Activated CD8-positive, alpha-beta memory T cell treated with anti-CD3 and anti-CD28 coated beads, Interleukin-2, amount 10 ng/mL, durations not matched to agents 7 days and 5 days (primary cell): ENCODE measurements at regions of chr1 and their contacts with region 1.

Region 1: GRCh38 chr1:8314346-8315280 is 3.3 kb upstream of the SLC45A1 start:
- DNase-seq: peak; percentile 60
- ATAC-seq: peak; percentile 25
- H3K4me3 Mint-ChIP-seq: no peak overlapping the region
- H3K27ac Mint-ChIP-seq: peak overlapping the region; percentile 9
- H3K4me1 Mint-ChIP-seq: peaks cover 13% of the 10 kb centered on the region
- H3K27me3 Mint-ChIP-seq: peaks cover 47% of the 10 kb centered on the region

Region 2: DNA sequence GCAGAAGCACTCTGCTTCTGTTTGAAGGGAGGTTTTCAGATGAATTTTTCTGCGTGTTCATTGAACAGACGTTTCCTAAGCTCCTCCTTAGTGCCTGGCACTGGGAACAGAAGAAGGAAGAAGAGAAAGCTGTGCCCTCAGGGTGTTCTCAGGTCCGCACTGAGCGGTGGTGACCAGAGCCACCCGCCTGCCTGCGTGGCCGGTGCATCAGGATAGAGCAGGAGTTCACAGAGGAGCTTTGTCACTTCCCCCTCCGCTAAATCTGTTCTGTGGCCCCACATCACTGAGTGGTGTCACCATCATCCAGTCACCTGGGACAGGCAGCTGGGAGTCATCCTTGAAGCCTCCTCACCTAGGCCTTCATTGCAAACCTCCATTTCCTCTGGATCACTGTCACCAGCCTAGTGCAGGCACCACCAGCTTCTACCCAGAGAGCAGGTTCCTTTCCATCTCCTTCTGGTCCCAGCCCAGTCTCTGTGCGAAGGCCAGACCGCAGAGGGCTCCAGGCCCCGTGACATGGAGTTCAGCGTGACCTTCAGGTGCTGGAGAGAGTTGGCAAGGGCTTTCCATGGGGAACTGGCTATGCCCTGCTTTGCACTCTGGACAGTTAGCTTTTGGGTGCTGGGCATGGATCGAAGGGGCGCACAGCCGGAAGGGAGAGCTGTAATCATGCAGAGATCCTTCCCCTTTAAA is 331.4 kb before region 1 on chr1:
- CTCF ChIA-PET with region 1: interaction called, 10 read pairs
- DNase-seq: no peak
- ATAC-seq: no peak
- H3K4me3 Mint-ChIP-seq: no peak overlapping the region
- H3K27ac Mint-ChIP-seq: no peak overlapping the region
- H3K4me1 Mint-ChIP-seq: peaks cover 10% of the 10 kb centered on the region
- H3K27me3 Mint-ChIP-seq: no peaks in the 10 kb centered on the region

Region 3: DNA sequence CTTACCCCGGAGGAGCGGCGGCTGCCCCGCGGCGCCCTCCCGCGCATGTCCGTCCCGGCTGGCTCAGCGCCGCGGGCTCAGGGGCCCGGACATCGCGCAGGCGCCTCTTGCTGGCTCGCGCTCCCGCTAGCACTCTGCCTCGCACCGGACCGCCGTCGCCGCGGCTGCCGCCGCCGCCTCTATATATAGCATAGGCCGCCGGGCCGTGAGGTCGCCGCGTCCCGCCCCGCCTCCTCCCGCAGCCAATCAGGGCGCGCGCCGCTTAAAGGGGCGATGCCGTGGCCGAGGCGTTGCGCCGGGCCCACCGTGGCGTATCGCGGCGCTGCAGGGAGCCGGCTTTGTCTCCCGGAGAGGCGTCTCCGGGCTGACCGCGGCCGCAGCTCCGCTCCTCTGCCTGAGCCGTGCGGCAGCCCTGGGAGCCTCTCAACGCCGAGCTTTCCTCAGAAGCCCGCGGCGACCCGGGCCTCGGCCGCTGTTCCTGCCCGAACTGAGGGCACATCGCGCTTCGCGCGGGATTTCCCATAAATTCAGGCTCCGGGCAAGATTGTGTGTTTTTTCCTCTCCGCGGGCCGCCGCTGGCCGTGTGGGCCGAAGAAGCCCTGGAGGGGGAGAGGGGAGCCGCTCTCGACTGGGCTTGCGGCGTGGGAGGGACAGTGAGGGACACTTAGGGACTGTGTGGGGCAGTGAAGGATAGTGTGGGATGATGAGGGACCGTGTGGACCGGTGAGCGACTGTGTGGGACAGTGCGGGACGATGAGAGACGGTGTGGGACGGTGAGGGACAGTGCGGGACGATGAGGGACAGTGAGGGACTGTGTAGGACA is 288.2 kb before region 1 on chr1 and contains the start of gene ERRFI1:
- CTCF ChIA-PET with region 1: interaction called, 48 read pairs
- DNase-seq: peak; percentile 88
- ATAC-seq: peak; percentile 96
- H3K4me3 Mint-ChIP-seq: peak within 1 kb of the TSS; percentile 70
- H3K27ac Mint-ChIP-seq: peak within 1 kb of the TSS; percentile 18
- H3K4me1 Mint-ChIP-seq: peaks cover 10% of the 10 kb centered on the region
- H3K27me3 Mint-ChIP-seq: peaks cover 55% of the 10 kb centered on the region
- total RNA-seq, gene ERRFI1: 0.53 to 1.5 TPM

Region 4: DNA sequence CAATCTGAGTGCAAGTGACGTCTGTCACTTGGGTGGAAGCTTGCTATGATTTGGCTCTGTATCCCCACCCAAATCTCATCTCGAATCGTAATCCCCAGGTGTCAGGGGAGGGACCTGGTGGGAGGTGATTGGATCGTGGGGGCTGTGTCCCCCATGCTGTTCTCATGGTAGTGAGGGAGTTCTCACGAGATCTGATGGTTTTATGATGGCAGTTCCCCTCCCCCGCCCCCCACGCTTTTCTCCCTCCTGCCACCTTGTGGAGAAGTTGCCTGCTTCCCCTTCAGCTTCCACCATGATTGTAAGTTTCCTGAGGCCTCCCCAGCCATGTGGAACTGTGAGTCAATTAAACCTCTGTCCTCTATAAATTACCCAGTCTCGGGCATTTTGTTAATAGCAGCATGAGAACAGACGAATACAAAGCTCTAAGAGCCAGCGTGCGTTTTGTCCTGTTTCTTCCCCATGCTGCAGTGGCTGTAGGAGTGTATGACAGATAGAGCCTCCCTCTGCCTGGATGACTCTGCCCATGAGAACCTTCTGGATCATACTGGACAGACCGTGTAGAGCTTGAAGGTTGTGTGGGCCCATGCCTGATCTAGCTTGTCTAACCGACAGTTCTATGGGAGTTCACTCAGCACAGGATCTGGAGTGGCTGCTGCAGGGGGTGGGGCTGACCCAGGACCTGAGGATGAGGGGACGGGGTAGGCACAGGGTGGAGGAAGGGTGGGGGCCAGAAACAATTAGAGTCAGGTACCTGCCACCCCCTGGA is 148.8 kb before region 1 on chr1:
- CTCF ChIA-PET with region 1: no interaction called
- DNase-seq: no peak
- ATAC-seq: no peak
- H3K4me3 Mint-ChIP-seq: no peak overlapping the region
- H3K27ac Mint-ChIP-seq: no peak overlapping the region
- H3K4me1 Mint-ChIP-seq: peaks cover 30% of the 10 kb centered on the region
- H3K27me3 Mint-ChIP-seq: no peaks in the 10 kb centered on the region

Region 5: GRCh38 chr1:8477166-8477982 is 162.8 kb after region 1 on chr1:
- CTCF ChIA-PET with region 1: no interaction called
- DNase-seq: peak; percentile 45
- ATAC-seq: peak; percentile 72
- H3K4me3 Mint-ChIP-seq: no peak overlapping the region
- H3K27ac Mint-ChIP-seq: no peak overlapping the region
- H3K4me1 Mint-ChIP-seq: peaks cover 42% of the 10 kb centered on the region
- H3K27me3 Mint-ChIP-seq: no peaks in the 10 kb centered on the region